Mammary epithelial cell (primary cell): ENCODE measurements at regions of chr18 and their contacts with region 1.

Region 1: GRCh38 chr18:70454704-70455322 is 166.0 kb downstream of the SOCS6 start:
- DNase-seq: peak; percentile 40
- H3K4me3 ChIP-seq: no peak overlapping the region
- H3K27ac ChIP-seq: no peak overlapping the region
- H3K4me1 ChIP-seq: no peaks in the 10 kb centered on the region
- H3K27me3 ChIP-seq: peaks cover 2% of the 10 kb centered on the region
- CTCF ChIP-seq: peak; percentile 79 to 89

Region 2: DNA sequence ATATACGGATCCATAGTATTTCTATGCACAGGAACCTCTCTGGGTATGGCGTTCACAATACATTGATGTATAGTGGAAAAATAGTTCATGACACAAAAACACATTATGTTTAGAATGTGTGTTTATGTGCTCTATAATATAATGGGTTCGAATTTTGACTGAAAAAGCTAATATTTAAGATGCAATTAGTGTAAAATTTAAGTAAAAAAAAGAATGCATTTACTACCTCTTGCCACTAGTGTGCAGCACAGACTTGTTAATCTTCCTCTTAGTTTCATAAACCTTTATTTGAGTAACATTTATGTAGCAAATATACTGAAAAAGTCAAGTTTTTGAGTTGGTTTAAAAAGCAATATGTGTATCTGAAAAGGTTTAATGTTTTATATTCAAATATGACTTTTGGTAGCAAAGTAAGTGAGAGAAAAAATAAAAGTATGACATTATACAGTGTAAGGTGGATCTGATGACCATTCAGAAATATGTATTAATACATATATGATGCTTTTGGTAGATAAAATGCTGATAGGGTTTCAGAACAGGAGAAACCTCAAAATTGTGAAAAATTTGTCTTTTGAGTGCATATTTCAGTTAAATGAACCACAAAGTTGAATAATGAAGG is 1607.5 kb before region 1 on chr18:
- CTCF ChIA-PET with region 1: no interaction called
- dilution Hi-C with region 1: no loop called
- in situ Hi-C with region 1: no loop called
- intact Hi-C with region 1: loop called (anchors 5 kb)
- DNase-seq: no peak
- H3K4me3 ChIP-seq: no peak overlapping the region
- H3K27ac ChIP-seq: no peak overlapping the region
- H3K4me1 ChIP-seq: no peaks in the 10 kb centered on the region
- H3K27me3 ChIP-seq: no peaks in the 10 kb centered on the region
- CTCF ChIP-seq: peak; percentile 64 to 87

Region 3: GRCh38 chr18:69845593-69846506 is 609.0 kb before region 1 on chr18:
- CTCF ChIA-PET with region 1: no interaction called
- dilution Hi-C with region 1: no loop called
- in situ Hi-C with region 1: no loop called
- intact Hi-C with region 1: loop called (anchors 10 kb)
- DNase-seq: no peak
- H3K4me3 ChIP-seq: no peak overlapping the region
- H3K27ac ChIP-seq: no peak overlapping the region
- H3K4me1 ChIP-seq: no peaks in the 10 kb centered on the region
- H3K27me3 ChIP-seq: peaks cover 2% of the 10 kb centered on the region
- CTCF ChIP-seq: no peak

Region 4: GRCh38 chr18:70085641-70086040 is 369.2 kb before region 1 on chr18:
- CTCF ChIA-PET with region 1: no interaction called
- dilution Hi-C with region 1: no loop called
- in situ Hi-C with region 1: no loop called
- intact Hi-C with region 1: loop called (anchors 5 kb)
- DNase-seq: no peak
- H3K4me3 ChIP-seq: no peak overlapping the region
- H3K27ac ChIP-seq: no peak overlapping the region
- H3K4me1 ChIP-seq: no peaks in the 10 kb centered on the region
- H3K27me3 ChIP-seq: no peaks in the 10 kb centered on the region
- CTCF ChIP-seq: no peak

Region 5: GRCh38 chr18:70195852-70196434 is 258.9 kb before region 1 on chr18:
- CTCF ChIA-PET with region 1: no interaction called
- dilution Hi-C with region 1: no loop called
- in situ Hi-C with region 1: no loop called
- intact Hi-C with region 1: loop called (anchors 1 kb)
- DNase-seq: peak; percentile 23
- H3K4me3 ChIP-seq: no peak overlapping the region
- H3K27ac ChIP-seq: no peak overlapping the region
- H3K4me1 ChIP-seq: no peaks in the 10 kb centered on the region
- H3K27me3 ChIP-seq: no peaks in the 10 kb centered on the region
- CTCF ChIP-seq: peak; percentile 81 to 88